HepG2 (cell line): ENCODE measurements at regions of chr10 and their contacts with region 1.

Region 1: GRCh38 chr10:79374312-79375191 is 27.3 kb downstream of the PPIF start:
- DNase-seq: peak; percentile 58
- ATAC-seq: peak; percentile 61
- H3K4me3 ChIP-seq: no peak overlapping the region
- H3K27ac ChIP-seq: no peak overlapping the region
- H3K4me1 ChIP-seq: peaks cover 38% of the 10 kb centered on the region
- H3K27me3 ChIP-seq: no peaks in the 10 kb centered on the region
- CTCF ChIP-seq: peak; percentile 96
- EP300 ChIP-seq: no peak
- POLR2A ChIP-seq: no peak
- RAD21 ChIP-seq: peak; percentile 96

Region 2: GRCh38 chr10:79286318-79286951 is 88.1 kb before region 1 on chr10:
- CTCF ChIA-PET with region 1: no interaction called
- POLR2A ChIA-PET with region 1: no interaction called
- in situ Hi-C with region 1: no loop called
- intact Hi-C with region 1: no loop called
- DNase-seq: no peak
- ATAC-seq: no peak
- H3K4me3 ChIP-seq: no peak overlapping the region
- H3K27ac ChIP-seq: no peak overlapping the region
- H3K4me1 ChIP-seq: no peaks in the 10 kb centered on the region
- H3K27me3 ChIP-seq: no peaks in the 10 kb centered on the region
- CTCF ChIP-seq: no peak
- EP300 ChIP-seq: no peak
- POLR2A ChIP-seq: no peak
- RAD21 ChIP-seq: no peak

Region 3: DNA sequence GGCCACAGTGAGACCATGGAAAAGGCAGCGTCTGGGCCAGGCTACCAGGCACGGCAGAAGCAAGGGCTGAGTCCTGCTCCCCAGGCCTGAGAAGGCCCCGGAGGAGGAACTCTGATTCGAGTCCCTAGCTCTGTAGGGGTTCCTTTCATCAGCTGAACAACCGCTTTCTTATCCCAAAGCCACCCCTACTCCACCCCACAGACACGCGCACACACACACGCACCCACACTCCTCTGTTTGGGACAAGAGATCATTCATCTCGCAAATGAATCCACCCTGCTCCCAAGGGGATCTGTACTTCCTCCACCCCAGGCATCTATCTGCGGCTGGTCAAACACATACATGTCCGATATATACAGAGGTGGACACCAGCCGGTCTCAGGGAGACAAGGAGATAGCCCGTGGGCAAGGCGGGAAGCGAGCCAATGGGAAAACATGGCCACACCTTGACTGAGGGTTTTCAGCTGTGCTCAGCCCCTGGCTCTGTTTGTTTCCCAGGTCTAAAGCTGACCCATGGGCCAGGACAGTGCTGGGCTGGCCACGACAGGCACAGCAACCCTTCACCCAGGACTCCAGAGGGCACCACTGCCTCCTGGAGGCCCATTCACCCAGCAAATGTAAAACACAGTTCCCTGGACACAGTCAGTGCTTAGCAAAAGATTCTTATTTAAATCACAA is 63.6 kb after region 1 on chr10:
- CTCF ChIA-PET with region 1: no interaction called
- POLR2A ChIA-PET with region 1: interaction called, 3 read pairs
- in situ Hi-C with region 1: no loop called
- intact Hi-C with region 1: loop called (anchors 2 kb)
- DNase-seq: no peak
- ATAC-seq: peak; percentile 77
- H3K4me3 ChIP-seq: no peak overlapping the region
- H3K27ac ChIP-seq: no peak overlapping the region
- H3K4me1 ChIP-seq: peaks cover 34% of the 10 kb centered on the region
- H3K27me3 ChIP-seq: no peaks in the 10 kb centered on the region
- CTCF ChIP-seq: peak; percentile 62
- EP300 ChIP-seq: no peak
- POLR2A ChIP-seq: no peak
- RAD21 ChIP-seq: 0 out of 2 replicates have a peak, but pooled peaks have one; percentile 29

Region 4: GRCh38 chr10:79463578-79464496 is 89.3 kb after region 1 on chr10:
- CTCF ChIA-PET with region 1: interaction called, 19 read pairs
- POLR2A ChIA-PET with region 1: interaction called, 6 read pairs
- in situ Hi-C with region 1: no loop called
- intact Hi-C with region 1: loop called (anchors 1 kb)
- DNase-seq: no peak
- ATAC-seq: no peak
- H3K4me3 ChIP-seq: no peak overlapping the region
- H3K27ac ChIP-seq: no peak overlapping the region
- H3K4me1 ChIP-seq: peaks cover 8% of the 10 kb centered on the region
- H3K27me3 ChIP-seq: peaks cover 0 to 11% of the 10 kb centered on the region in 2 experiments; a peak in 2 of 5 replicates
- CTCF ChIP-seq: no peak
- EP300 ChIP-seq: no peak
- POLR2A ChIP-seq: no peak
- RAD21 ChIP-seq: no peak

Region 5: GRCh38 chr10:79487296-79488194 is 113.0 kb after region 1 on chr10:
- CTCF ChIA-PET with region 1: interaction called, 45 read pairs
- POLR2A ChIA-PET with region 1: interaction called, 4 read pairs
- in situ Hi-C with region 1: loop called (anchors 5 kb)
- intact Hi-C with region 1: loop called (anchors 1 kb)
- DNase-seq: peak; percentile 61
- ATAC-seq: peak; percentile 95
- H3K4me3 ChIP-seq: no peak overlapping the region
- H3K27ac ChIP-seq: no peak overlapping the region
- H3K4me1 ChIP-seq: no peaks in the 10 kb centered on the region
- H3K27me3 ChIP-seq: peaks cover 3 to 27% of the 10 kb centered on the region in 2 experiments; a peak in 3 of 5 replicates
- CTCF ChIP-seq: peak; percentile 92
- EP300 ChIP-seq: no peak
- POLR2A ChIP-seq: no peak
- RAD21 ChIP-seq: peak; percentile 81